Aorta (tissue), 5 donors: ENCODE measurements at regions of chr16 and their contacts with region 1.

Region 1: DNA sequence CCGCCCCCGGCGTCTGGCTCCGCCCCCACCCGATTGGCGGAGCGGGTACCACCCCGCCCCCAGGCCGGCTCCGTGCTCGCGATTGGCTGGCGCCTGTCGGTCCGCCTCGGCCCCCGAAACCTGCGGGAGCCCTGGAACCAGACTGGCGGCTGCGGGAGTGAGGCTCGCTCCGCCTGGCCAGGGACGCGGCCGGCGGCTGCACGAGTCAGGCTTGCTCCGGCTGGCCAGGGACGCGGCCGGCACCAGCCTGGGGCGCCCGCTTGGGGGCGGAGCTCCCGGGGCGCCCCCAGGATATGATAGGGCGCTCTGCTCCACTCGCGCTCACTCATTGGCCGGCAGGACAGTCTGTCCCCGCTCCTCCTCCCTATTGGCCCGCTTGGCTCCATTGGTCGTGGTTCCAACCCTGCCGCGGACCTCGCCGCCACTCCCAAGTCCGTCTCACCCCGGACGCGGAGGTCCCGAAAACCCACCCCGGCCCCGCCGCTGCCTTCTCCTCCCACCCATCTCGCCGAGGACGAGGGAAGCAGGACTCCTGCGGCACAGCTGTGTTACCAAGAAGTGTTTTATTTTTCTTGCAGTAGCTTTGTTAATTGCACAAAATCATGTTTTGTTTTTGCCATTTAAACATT is 340 bp upstream of the ROGDI start:
- DNase-seq: peak; percentile 95 to 97
- ATAC-seq: peak; percentile 96
- H3K4me3 ChIP-seq: peak overlapping the region; percentile 63 to 71
- H3K27ac ChIP-seq: peak overlapping the region in 1 of 2 donors; percentile 18
- H3K4me1 ChIP-seq: no peaks in the 10 kb centered on the region
- H3K27me3 ChIP-seq: no peaks in the 10 kb centered on the region

Region 2: DNA sequence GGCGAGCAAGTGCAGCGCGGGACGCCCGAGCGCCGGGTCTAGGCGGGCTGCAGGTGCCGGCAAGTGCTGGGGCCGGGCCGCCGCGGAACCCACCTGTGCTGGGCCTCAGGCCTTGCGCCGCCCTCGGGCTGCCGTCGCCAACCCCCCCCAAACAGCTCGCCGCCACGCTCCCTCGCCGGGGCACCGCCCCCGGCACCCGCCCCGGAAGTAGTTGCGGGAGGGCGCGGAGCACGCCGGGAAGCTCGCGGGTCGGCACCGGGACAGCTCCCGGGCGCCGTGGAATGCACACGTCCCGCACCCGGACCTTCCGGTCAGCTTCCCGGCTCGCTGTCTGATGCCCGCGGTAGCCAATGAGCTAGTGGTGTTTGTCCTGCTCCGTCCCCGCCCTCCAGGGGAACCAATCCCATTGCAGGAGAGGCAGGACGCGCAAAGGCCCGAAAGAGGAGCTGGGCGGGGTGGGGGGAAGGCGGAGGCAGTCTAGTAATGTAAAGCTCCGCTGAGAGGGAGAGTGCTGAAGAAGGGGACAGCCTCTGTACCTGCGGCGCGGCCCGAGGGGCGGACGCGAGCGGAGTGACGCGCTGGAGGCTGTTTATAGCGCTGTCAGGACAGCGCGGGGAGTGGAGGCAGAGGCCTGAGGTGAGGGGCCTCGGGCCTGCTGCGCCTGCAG is 68.6 kb before region 1 on chr16 and contains the starts of genes ANKS3 and DNAAF8:
- intact Hi-C with region 1: loop called in 1 of 2 experiments (anchors 1 kb)
- DNase-seq: peak; percentile 98
- ATAC-seq: peak; percentile 96
- H3K4me3 ChIP-seq: peak within 1 kb of the TSS; percentile 74 to 84
- H3K27ac ChIP-seq: peak within 1 kb of the TSS in 1 of 2 donors; percentile 88
- H3K4me1 ChIP-seq: no peaks in the 10 kb centered on the region
- H3K27me3 ChIP-seq: no peaks in the 10 kb centered on the region
- total RNA-seq, gene ANKS3: 21.7 to 36.7 TPM
- total RNA-seq, gene DNAAF8: 0.24 TPM in 1 of 2 donors, not detected in the other

Region 3: GRCh38 chr16:4766874-4767628 is 35.7 kb before region 1 on chr16 and contains the start of gene ZNF500:
- intact Hi-C with region 1: loop called in 1 of 2 experiments (anchors 2 kb)
- DNase-seq: peak; percentile 99 to 100
- ATAC-seq: peak; percentile 95
- H3K4me3 ChIP-seq: peak within 1 kb of the TSS; percentile 77 to 94
- H3K27ac ChIP-seq: peak within 1 kb of the TSS in 1 of 2 donors; percentile 73
- H3K4me1 ChIP-seq: no peaks in the 10 kb centered on the region
- H3K27me3 ChIP-seq: no peaks in the 10 kb centered on the region
- total RNA-seq, gene ZNF500: 13.0 to 17.0 TPM